BJ (cell line): ENCODE measurements at regions of chr3 and their contacts with region 1.

Region 1: GRCh38 chr3:112043603-112044201 is 9.2 kb downstream of the TMPRSS7 start:
- DNase-seq: no peak
- H3K4me3 ChIP-seq: no peak overlapping the region
- H3K27me3 ChIP-seq: no peaks in the 10 kb centered on the region
- CTCF ChIP-seq: peak; percentile 91

Region 2: GRCh38 chr3:111989061-111989678 is 54.5 kb before region 1 on chr3:
- CTCF ChIA-PET with region 1: interaction called, 22 read pairs
- POLR2A ChIA-PET with region 1: no interaction called
- DNase-seq: peak; percentile 25
- H3K4me3 ChIP-seq: no peak overlapping the region
- H3K27me3 ChIP-seq: no peaks in the 10 kb centered on the region
- CTCF ChIP-seq: peak; percentile 79

Region 3: GRCh38 chr3:111998636-111999483 is 44.8 kb before region 1 on chr3 and contains the start of gene TAGLN3:
- CTCF ChIA-PET with region 1: interaction called, 17 read pairs
- POLR2A ChIA-PET with region 1: no interaction called
- DNase-seq: no peak
- H3K4me3 ChIP-seq: peak within 1 kb of the TSS; percentile 36
- H3K27me3 ChIP-seq: no peaks in the 10 kb centered on the region
- CTCF ChIP-seq: no peak
- polyA plus RNA-seq, gene TAGLN3: 0.09 TPM in 1 of 2 replicates, not detected in the other

Region 4: GRCh38 chr3:112032098-112032731 is 11.5 kb before region 1 on chr3:
- CTCF ChIA-PET with region 1: interaction called, 15 read pairs
- POLR2A ChIA-PET with region 1: no interaction called
- DNase-seq: no peak
- H3K4me3 ChIP-seq: no peak overlapping the region
- H3K27me3 ChIP-seq: no peaks in the 10 kb centered on the region
- CTCF ChIP-seq: no peak